Kidney (tissue), 22 donors: ENCODE measurements at regions of chr19 and their contacts with region 1.

Region 1: DNA sequence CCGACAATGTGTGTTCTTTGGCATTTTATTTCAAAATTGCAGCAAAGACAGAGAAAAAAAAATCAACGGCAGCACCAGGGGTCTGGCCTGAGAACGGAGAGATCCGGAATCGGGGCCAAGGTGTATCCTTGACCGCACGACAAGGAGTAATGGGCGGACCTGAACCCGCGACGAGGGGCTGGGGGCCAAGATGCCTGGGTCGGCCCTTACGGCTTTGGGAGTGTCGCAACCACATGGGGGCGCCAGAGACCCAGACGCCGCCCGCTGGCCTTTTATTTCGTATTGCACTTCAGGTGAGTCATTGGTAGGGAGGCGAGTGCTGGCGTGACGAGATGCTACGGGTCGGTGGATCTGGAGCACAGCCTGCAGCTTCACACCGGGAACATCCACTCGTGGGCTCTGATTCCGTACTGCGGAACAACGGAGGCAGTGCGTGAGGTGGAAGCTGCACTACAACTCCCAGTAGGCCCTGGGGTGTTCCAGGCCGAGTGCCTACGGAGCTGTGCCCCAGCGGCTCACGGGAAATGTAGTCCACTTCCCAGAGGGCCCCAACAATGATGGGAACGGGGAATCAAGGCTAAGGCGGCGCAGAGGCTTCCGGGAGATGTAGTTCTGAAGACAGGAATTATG is 15.7 kb downstream of the BCAT2 start:
- DNase-seq: peak; percentile 95 to 97 (median 96)
- H3K4me3 ChIP-seq: peak overlapping the region; percentile 58 to 92 (median 89)
- H3K27ac ChIP-seq: peak overlapping the region; percentile 76 to 92
- H3K4me1 ChIP-seq: peaks cover 0 to 7% (median 5%) of the 10 kb centered on the region in 3 donors
- H3K27me3 ChIP-seq: no peaks in the 10 kb centered on the region
- CTCF ChIP-seq: peak; percentile 90

Region 2: GRCh38 chr19:48568345-48568886 is 226.8 kb before region 1 on chr19:
- intact Hi-C with region 1: no loop called
- DNase-seq: peak in 3 of 5 donors; percentile 29 to 94 (median 50)
- H3K4me3 ChIP-seq: no peak overlapping the region
- H3K27ac ChIP-seq: no peak overlapping the region
- H3K4me1 ChIP-seq: peaks cover 0 to 4% (median 0%) of the 10 kb centered on the region in 3 donors
- H3K27me3 ChIP-seq: no peaks in the 10 kb centered on the region
- CTCF ChIP-seq: no peak

Region 3: DNA sequence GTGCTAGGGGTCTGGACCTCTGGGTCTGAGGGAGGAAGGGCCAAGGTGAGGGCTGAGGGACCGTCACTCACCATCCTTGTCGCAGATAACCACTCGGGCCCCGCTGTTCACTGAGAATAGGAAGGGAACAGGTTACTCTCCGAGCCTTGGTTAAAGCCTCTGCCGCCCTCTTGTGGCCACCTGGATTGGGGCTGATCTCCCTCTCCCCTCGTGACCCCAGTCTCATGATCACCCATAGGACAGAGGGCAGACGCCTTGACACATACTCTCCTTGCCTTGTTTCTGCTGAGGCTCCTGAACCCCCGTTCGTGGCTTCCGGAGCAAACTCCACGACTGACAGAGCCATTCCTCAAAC is 40.5 kb after region 1 on chr19:
- intact Hi-C with region 1: loop called (anchors 5 kb)
- DNase-seq: peak; percentile 92 to 96 (median 94)
- H3K4me3 ChIP-seq: peak overlapping the region; percentile 42 to 76 (median 73)
- H3K27ac ChIP-seq: peak overlapping the region; percentile 72 to 95
- H3K4me1 ChIP-seq: peaks cover 0 to 5% (median 2%) of the 10 kb centered on the region in 3 donors
- H3K27me3 ChIP-seq: no peaks in the 10 kb centered on the region
- CTCF ChIP-seq: peak; percentile 84

Region 4: GRCh38 chr19:48900477-48901406 is 105.6 kb after region 1 on chr19:
- intact Hi-C with region 1: no loop called
- DNase-seq: peak in 3 of 5 donors; percentile 21 to 81 (median 46)
- H3K4me3 ChIP-seq: peak overlapping the region; percentile 60 to 78 (median 62)
- H3K27ac ChIP-seq: peak overlapping the region; percentile 71 to 95
- H3K4me1 ChIP-seq: peaks cover 0 to 10% (median 3%) of the 10 kb centered on the region in 3 donors
- H3K27me3 ChIP-seq: no peaks in the 10 kb centered on the region
- CTCF ChIP-seq: no peak

Region 5: GRCh38 chr19:48970923-48971395 is 175.8 kb after region 1 on chr19:
- intact Hi-C with region 1: loop called (anchors 10 kb)
- DNase-seq: peak; percentile 84 to 92 (median 88)
- H3K4me3 ChIP-seq: no peak overlapping the region
- H3K27ac ChIP-seq: no peak overlapping the region
- H3K4me1 ChIP-seq: peaks cover 0 to 10% (median 7%) of the 10 kb centered on the region in 3 donors
- H3K27me3 ChIP-seq: no peaks in the 10 kb centered on the region
- CTCF ChIP-seq: peak; percentile 88